Endothelial cell of umbilical vein (primary cell): ENCODE measurements at regions of chr19 and their contacts with region 1.

Region 1: DNA sequence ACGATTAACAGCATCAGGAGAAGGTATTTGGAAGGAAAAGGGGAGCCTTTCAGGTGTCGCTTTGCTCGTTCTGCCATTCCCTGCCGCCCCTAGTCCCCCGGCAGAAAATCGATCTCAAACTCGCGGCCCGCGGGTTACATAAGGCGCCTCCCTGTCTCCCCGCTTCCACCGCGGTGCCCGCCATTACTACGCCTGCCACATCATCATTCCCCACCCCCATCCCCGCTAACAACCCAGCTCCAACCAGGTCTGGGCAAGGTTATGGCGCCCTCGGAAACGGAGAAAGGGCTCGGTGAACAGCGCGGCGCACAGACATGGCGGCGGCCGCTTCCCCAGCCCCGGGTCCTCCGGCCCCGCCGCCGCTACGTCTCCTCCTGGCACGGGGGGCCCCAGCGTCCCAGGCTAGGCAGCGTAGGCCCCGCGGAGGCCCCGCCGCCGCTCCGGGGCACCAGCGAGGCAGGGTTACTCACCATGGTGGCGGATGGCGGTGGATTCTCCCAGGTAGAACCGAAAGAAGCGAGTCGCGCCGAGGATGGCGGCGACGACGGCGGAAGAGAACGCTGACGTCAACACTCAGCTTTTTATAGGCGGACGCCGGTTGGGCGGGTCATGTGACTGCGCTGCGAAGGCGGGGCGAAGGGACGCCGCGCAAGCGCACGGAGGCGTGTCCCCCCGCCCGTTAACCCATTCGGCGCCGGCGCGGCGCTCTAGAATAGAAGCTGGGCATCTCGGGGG is at the start of gene EEF2:
- DNase-seq: peak; percentile 86
- H3K4me3 ChIP-seq: peak within 1 kb of the TSS; percentile 63 to 98 (median 97)
- H3K27ac ChIP-seq: peak within 1 kb of the TSS; percentile 90
- H3K4me1 ChIP-seq: peaks cover 31% of the 10 kb centered on the region
- H3K27me3 ChIP-seq: no peaks in the 10 kb centered on the region
- CTCF ChIP-seq: no peak
- POLR2A ChIP-seq: peak; percentile 99
- total RNA-seq, gene EEF2: 2,318 and 2,351 TPM in 2 replicates

Region 2: DNA sequence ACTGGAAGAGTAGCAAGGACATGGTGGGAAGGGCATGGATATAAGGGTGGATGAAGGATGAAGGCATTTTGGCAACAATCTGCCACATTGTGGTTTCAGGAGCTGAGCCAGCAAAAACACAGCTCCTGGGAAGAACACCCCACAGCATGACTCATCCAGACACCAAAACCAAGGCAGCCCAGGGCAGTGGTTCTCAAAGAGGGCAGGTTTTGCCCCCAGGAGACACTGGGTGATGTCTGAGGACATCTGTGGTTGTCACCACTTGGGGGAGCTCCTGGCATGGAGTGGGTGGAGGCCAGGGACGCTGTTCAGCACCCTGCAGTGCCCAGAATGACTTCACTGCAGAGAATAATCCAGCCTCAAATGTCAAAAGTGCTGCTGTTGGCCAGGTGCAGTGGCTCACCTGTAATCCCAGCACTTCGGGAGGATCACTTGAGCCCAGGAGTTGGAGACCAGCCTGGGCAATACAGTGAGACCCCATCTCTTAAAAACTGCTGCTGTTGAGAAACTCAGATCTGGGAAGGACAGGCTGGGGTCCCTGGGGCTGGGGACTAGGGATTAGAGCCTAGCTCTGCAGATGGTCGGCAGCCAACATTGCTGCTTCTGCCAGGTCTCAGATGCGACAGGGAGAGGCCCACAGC is 132.3 kb before region 1 on chr19:
- CTCF ChIA-PET with region 1: interaction called, 21 read pairs
- POLR2A ChIA-PET with region 1: no interaction called
- dilution Hi-C with region 1: no loop called
- intact Hi-C with region 1: no loop called
- DNase-seq: peak; percentile 30
- H3K4me3 ChIP-seq: no peak overlapping the region
- H3K27ac ChIP-seq: no peak overlapping the region
- H3K4me1 ChIP-seq: no peaks in the 10 kb centered on the region
- H3K27me3 ChIP-seq: no peaks in the 10 kb centered on the region
- CTCF ChIP-seq: peak; percentile 29 to 53
- POLR2A ChIP-seq: no peak

Region 3: GRCh38 chr19:4007021-4007835 is 22.2 kb after region 1 on chr19 and contains the start of gene PIAS4:
- CTCF ChIA-PET with region 1: interaction called, 15 read pairs
- POLR2A ChIA-PET with region 1: no interaction called
- dilution Hi-C with region 1: no loop called
- intact Hi-C with region 1: loop called (anchors 1 kb)
- DNase-seq: peak; percentile 95
- H3K4me3 ChIP-seq: peak within 1 kb of the TSS; percentile 75 to 97 (median 94)
- H3K27ac ChIP-seq: peak within 1 kb of the TSS; percentile 40
- H3K4me1 ChIP-seq: peaks cover 13% of the 10 kb centered on the region
- H3K27me3 ChIP-seq: no peaks in the 10 kb centered on the region
- CTCF ChIP-seq: no peak
- POLR2A ChIP-seq: peak; percentile 70
- total RNA-seq, gene PIAS4: 46.2 and 47.2 TPM in 2 replicates

Region 4: DNA sequence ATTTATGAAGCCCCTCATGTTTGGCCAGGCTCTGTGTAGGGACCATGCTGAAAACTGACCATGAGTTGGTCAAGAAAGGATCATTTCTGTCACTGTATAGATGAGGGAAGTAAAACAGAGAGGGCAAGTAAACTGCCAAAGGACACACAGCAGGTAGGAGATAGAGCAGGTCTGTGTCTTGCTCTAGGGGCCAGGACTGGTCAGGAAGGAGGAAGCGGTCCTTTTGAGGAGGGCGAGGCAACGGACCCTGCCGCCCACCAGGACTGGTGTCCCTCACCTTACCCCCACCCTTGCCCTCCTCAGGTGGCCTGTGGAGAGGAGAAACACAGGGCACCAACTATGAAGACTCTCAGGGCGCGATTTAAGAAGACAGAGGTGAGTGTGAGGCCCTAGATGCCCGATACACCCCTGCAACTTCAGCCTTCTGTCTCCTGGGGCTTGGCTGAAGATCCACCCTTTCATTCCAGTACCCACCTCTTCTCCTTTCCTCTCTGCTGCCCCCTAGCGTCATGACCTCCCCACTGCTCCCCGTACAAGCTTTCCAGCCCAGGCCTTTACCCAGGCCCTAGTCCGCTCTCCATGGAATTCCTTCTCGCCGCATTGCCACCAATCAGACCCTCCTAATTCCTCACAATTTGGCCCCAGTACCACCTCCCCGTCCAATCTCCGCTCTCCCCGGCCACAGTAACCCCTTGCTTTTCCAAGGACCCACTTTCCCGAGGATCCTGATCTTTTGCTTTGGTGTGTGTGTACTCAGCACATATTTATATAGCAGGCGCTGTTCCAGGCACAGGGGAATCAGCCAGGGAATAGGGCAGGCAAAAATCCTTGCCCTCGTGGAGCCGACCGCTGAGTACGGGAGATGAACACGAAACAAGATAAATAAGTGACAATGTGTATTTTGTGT is 201.3 kb after region 1 on chr19:
- CTCF ChIA-PET with region 1: interaction called, 3 read pairs
- POLR2A ChIA-PET with region 1: no interaction called
- dilution Hi-C with region 1: no loop called
- intact Hi-C with region 1: loop called (anchors 5 kb)
- DNase-seq: peak; percentile 61
- H3K4me3 ChIP-seq: no peak overlapping the region
- H3K27ac ChIP-seq: no peak overlapping the region
- H3K4me1 ChIP-seq: peaks cover 3% of the 10 kb centered on the region
- H3K27me3 ChIP-seq: no peaks in the 10 kb centered on the region
- CTCF ChIP-seq: peak; percentile 79 to 89
- POLR2A ChIP-seq: no peak

Region 5: DNA sequence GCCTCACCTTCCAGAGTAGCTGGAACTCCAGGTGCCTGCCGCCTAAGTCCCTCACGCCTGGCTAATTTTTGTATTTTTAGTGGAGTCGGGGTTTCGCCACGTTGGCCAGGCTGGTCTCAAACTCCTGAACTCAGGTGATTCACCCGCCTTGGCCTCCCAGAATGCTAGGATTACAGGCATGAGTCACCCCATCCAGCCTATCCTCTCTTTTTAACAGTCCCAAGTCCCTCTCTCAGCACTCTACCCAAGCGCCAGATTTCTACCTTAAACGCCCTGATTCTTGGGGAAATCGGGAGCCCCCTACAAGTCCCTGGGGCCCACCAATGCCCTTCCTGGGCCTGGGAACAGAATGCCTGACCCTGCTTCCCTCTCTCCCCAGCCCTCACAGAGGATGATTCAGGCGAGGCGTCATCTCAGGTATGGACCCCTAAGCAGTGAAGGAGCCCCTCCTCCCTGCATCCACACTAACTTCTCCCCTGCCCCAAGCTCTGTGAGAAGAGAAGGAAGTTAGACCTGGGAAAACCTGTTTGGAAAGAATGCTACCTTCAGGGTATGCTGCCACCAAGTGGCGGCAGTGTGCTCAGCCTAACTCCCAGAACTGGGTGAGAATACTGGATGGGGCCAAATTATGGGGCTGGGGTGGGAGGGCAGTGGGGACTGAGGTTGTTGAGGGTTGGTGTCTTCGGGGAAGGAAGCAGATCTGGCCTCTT is 223.5 kb after region 1 on chr19:
- CTCF ChIA-PET with region 1: interaction called, 4 read pairs
- POLR2A ChIA-PET with region 1: no interaction called
- dilution Hi-C with region 1: no loop called
- intact Hi-C with region 1: loop called (anchors 1 kb)
- DNase-seq: no peak
- H3K4me3 ChIP-seq: no peak overlapping the region
- H3K27ac ChIP-seq: no peak overlapping the region
- H3K4me1 ChIP-seq: no peaks in the 10 kb centered on the region
- H3K27me3 ChIP-seq: no peaks in the 10 kb centered on the region
- CTCF ChIP-seq: peak; percentile 37 to 74
- POLR2A ChIP-seq: no peak